CD8-positive, alpha-beta T cell (primary cell): ENCODE measurements at regions of chr12 and their contacts with region 1.

Region 1: DNA sequence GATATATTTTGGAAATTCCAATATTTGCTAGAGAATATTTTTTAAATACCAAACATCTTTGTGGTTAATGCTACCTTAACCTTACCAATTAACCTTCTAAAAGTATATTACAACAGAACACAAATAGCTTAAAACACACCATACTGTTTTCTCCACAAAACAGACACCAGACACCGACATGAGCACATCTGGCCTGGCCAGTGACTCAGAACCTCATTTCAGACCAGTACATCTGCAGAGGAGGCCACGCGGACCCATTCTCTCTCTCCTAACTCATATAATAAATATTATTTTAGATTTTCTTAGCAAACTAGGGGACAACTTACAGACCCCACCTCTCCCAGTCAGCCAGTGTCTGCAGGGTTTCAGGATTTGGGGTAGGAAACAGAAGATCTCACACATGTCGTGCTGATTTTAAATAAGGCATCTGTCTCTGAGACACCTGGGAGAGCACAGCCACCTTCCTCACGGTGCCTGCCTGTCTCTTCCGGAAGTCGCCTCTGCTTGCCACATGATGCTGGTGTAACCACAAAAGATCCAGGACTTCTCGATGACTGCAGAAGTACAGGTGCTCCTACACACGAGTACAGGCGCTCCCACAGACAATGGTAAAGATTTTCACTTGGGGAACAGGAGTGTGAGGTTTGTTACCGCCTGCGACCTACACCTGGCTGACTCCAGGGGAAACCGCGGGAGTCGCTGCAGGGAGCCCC is 9.7 kb upstream of the ANKLE2 start:
- DNase-seq: peak; percentile 13 to 79 (median 51)
- ATAC-seq: peak; percentile 84
- H3K4me3 ChIP-seq: peak overlapping the region in 1 of 2 experiments; percentile 37
- H3K4me3 Mint-ChIP-seq: peak overlapping the region; percentile 49
- H3K27ac ChIP-seq: peak overlapping the region; percentile 34 to 46
- H3K27ac Mint-ChIP-seq: peak overlapping the region; percentile 83
- H3K4me1 ChIP-seq: peaks cover 69% of the 10 kb centered on the region
- H3K4me1 Mint-ChIP-seq: peaks cover 62% of the 10 kb centered on the region
- H3K27me3 ChIP-seq: no peaks in the 10 kb centered on the region
- H3K27me3 Mint-ChIP-seq: no peaks in the 10 kb centered on the region
- CTCF ChIP-seq: no peak

Region 2: DNA sequence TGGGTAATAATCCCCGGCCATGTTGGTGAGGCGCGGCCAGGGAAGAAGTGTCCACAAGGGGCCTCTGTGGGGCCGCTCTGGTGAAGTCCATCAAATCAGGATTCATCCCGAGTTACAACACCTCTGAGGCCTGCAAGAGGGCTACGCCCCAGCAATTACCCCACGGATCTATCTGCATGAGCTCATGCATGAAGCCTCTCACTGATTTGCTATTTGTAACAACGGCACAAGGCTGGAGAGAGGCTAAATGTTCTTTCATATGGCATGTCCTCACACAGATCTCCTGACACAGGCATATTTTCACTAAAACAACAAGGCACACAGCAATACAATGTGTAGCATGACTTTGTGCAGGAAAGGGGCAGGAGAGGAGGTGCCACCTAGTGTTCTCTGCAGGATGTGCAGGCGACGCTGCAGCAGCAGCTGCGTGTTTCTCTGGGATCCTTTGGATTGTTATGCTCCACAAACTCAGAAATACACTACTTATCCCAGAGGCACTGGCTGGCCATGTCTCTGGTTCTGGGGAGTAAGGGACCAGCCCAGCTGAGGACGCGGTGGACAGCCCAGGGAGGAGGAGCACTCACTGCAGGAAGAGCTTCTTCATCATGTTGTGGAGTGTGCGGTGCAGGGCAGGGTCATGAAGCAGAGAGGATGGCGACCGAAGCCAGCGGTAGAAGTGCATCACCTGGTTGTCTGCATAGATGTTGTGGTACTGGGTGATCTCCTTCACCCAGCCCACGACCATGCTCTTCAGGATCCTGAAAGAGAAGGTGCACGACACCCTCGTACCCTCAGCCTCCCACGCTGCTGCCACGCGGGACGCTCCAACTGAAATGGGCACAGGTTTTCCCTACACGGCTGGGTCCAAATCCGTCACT is 132.5 kb before region 1 on chr12:
- CTCF ChIA-PET with region 1: no interaction called
- POLR2A ChIA-PET with region 1: no interaction called
- intact Hi-C with region 1: no loop called
- DNase-seq: no peak
- ATAC-seq: peak; percentile 54
- H3K4me3 ChIP-seq: no peak overlapping the region
- H3K4me3 Mint-ChIP-seq: no peak overlapping the region
- H3K27ac ChIP-seq: no peak overlapping the region
- H3K27ac Mint-ChIP-seq: no peak overlapping the region
- H3K4me1 ChIP-seq: no peaks in the 10 kb centered on the region
- H3K4me1 Mint-ChIP-seq: no peaks in the 10 kb centered on the region
- H3K27me3 ChIP-seq: no peaks in the 10 kb centered on the region
- H3K27me3 Mint-ChIP-seq: no peaks in the 10 kb centered on the region
- CTCF ChIP-seq: peak; percentile 24

Region 3: DNA sequence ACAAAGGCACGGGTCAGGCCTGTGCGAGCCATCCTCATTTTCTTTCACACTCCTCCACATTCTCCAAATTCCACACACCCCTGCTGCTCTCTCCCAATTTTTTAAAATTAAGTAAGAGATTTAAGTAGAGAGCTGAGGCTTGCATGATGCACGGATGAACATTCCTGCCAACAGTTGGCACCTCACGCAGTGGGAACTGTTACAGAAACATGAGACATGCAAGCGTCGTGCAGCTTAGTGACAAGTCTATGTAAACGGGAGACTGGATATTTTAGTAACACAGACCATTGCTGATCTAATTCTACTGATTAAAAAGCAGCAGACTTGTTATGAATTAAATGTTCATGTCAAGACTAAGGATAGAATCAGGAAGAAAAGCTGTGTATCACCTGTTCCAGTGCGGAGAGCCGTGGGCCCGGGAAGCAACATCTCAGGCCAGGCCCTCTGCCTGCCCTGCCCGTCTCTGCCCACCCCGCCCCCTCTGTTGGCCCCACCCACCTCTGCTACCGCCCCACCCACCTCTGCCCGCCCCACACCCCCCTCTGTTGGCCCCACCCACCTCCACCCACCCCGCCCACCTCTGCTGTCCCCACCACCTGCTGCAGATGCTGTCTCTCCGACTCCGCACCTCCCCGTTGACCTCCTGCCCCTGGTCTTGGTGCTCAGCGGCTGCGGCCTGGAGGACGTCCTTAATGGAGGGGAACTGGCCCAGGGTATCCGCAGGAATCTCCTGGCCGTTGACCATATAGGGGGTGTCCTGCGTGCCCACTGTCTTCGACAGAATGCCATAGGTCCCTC is 36.2 kb after region 1 on chr12:
- CTCF ChIA-PET with region 1: interaction called, 6 read pairs
- POLR2A ChIA-PET with region 1: no interaction called
- intact Hi-C with region 1: loop called (anchors 1 to 5 kb)
- DNase-seq: no peak
- ATAC-seq: no peak
- H3K4me3 ChIP-seq: no peak overlapping the region
- H3K4me3 Mint-ChIP-seq: no peak overlapping the region
- H3K27ac ChIP-seq: no peak overlapping the region
- H3K27ac Mint-ChIP-seq: peak overlapping the region; percentile 32
- H3K4me1 ChIP-seq: peaks cover 18% of the 10 kb centered on the region
- H3K4me1 Mint-ChIP-seq: peaks cover 28% of the 10 kb centered on the region
- H3K27me3 ChIP-seq: no peaks in the 10 kb centered on the region
- H3K27me3 Mint-ChIP-seq: no peaks in the 10 kb centered on the region
- CTCF ChIP-seq: no peak

Region 4: GRCh38 chr12:132812631-132813305 is 41.5 kb after region 1 on chr12:
- CTCF ChIA-PET with region 1: no interaction called
- POLR2A ChIA-PET with region 1: no interaction called
- intact Hi-C with region 1: loop called (anchors 1 to 5 kb)
- DNase-seq: peak in 4 of 9 experiments; percentile 35 to 61 (median 48)
- ATAC-seq: peak; percentile 56
- H3K4me3 ChIP-seq: no peak overlapping the region
- H3K4me3 Mint-ChIP-seq: no peak overlapping the region
- H3K27ac ChIP-seq: no peak overlapping the region
- H3K27ac Mint-ChIP-seq: peak overlapping the region; percentile 70
- H3K4me1 ChIP-seq: no peaks in the 10 kb centered on the region
- H3K4me1 Mint-ChIP-seq: peaks cover 15% of the 10 kb centered on the region
- H3K27me3 ChIP-seq: no peaks in the 10 kb centered on the region
- H3K27me3 Mint-ChIP-seq: no peaks in the 10 kb centered on the region
- CTCF ChIP-seq: no peak

Region 5: DNA sequence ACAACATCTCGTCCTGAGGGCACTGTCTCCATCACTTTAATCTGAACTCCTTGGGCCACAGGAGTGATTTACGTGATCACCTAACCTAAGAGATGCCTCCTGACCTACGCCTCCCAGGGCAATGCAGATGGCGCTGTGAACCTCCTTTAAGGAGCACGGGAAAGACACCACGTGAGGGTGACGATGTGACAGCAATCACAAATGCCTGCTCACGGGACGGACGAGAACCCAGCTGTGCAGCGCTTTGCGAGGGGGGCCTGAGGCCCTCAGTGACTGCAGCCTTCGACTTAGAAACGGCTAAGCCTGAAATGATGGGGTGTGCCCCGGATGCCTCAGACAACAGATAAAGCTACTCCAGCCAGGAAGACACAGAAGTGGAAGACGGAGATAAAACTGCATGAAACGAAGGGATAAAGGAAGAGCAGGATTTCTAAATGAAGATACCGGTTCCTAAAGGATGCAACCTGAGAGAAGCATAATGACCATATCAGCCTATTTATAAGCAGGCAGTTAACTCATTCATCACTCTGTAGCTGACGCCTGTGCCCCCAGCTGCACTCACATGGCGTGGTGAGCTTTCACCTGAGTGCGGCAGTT is 71.3 kb after region 1 on chr12:
- CTCF ChIA-PET with region 1: no interaction called
- POLR2A ChIA-PET with region 1: no interaction called
- intact Hi-C with region 1: no loop called
- DNase-seq: no peak
- ATAC-seq: no peak
- H3K4me3 ChIP-seq: no peak overlapping the region
- H3K4me3 Mint-ChIP-seq: no peak overlapping the region
- H3K27ac ChIP-seq: no peak overlapping the region
- H3K27ac Mint-ChIP-seq: no peak overlapping the region
- H3K4me1 ChIP-seq: peaks cover 20% of the 10 kb centered on the region
- H3K4me1 Mint-ChIP-seq: peaks cover 23% of the 10 kb centered on the region
- H3K27me3 ChIP-seq: no peaks in the 10 kb centered on the region
- H3K27me3 Mint-ChIP-seq: no peaks in the 10 kb centered on the region
- CTCF ChIP-seq: no peak